ENCODE measurements at regions of chr4 and their contacts with region 1.

Region 1: DNA sequence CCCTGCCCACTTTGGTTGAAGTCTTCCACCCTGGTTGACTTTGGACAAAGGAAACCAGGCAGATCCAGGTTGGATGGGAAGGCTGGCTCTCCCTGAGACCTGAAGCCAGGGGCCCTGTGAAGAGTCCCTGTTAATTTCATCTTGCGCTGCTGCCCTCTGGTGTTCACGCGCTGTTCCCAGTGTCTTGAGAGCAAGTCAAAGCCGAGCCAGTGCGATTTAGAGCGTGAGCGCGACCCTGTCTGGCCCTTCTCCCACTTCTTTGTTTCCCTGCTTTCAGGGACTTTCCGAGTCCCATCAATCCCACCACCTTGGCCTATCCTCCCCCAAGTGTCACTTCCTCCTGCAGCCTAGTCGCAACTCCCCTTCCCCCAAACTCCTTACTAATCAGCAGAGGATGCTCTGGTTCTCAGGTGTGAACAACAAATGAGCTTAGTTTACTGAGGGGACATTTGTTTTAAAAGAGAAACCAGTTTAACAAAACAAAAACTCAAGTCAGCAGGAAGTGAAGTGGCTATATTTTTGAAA is 25.8 kb upstream of the CHRNA9 start:
- DNase-seq: peak; percentile 57
- CTCF ChIP-seq: peak; percentile 91

Region 2: GRCh38 chr4:39657465-39657864 is 651.8 kb before region 1 on chr4:
- CTCF ChIA-PET with region 1: no interaction called
- POLR2A ChIA-PET with region 1: no interaction called
- DNase-seq: peak; percentile 71
- CTCF ChIP-seq: no peak

Region 3: DNA sequence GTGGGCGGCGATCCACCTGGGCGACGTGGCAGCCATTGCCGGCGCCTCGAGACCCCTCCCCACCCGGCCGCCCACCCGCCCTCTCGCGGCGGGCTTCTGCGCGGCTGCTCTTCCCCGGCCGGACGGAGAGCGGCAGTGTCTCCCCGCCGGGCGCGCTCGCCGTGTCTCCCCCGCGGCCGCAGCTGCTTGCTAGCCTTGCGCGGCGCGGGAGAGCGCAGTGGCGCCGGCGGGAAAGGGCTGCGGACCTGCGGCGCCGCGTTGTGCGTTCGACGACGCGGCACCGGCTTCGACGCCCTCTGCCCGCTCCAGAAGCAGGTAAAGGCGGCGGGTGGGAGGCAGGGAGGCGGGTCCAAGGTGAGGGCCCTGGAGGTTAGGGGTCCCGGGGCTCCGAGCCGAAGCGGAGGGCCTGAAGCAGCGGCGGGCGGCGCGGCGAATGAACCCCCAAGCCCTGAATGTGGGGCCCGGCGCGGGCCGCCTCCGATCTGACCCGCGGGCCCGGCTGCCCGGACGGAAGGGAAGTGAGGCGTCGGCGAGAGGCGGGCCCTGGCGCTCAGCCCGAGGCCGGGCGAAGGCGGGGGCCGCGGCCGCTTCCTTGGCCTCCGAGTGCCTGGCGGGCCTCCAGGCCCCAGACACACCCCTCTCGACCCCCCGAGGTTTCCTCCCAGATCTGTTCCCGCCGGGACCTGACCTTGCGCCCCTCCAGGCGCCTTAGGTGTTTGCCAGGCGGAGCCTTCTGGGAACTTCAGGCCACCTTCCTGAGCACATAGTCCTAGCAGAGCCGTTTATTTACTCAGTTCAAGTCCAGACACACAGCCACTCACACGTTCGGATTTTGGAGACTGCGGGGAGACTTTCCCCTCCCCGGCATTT is 252.4 kb before region 1 on chr4 and contains the start of gene N4BP2:
- CTCF ChIA-PET with region 1: interaction called, 17 read pairs
- POLR2A ChIA-PET with region 1: no interaction called
- DNase-seq: peak; percentile 82
- CTCF ChIP-seq: peak; percentile 84

Region 4: DNA sequence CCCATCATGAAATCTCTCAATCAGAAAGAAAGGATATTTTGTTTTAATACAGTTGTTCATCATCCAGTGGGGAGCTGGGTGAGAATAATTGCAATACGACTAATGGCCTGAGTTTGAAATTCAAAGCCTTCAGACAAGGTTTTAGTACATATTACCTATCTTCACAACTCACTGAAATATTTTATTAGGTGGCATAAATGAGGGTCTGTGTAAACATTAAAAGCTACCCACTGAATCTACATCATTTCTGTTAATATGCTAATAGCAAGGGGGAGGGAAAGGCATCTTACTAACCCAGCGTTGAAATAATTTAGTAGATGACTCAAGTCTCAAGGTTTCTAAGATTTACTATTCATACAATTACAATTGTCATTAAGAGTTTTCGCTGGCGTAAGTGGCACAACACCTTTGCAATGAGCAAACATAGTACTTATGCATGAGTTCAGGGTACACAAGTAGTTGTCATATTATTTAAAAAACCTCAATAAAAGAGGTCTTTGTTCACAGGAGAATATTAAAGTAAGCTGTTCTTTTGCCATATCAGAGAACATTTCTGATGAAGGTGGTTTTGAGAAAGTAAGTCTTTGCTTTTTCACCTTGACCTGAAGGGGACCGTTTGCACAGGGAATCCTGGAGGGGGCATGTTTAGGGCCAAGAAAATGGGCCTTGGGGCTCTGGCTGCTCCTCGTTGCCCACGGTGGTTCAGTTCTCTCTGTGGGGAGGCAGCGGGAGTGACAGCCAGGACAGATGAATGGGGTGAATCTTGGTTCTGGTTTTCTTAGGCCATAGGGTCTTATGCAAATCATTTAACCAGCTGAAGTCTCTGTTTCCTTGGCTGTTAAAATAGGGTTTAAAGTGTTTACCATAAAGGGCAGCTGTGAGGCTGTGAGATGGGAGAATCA is 116.9 kb before region 1 on chr4:
- CTCF ChIA-PET with region 1: interaction called, 14 read pairs
- POLR2A ChIA-PET with region 1: no interaction called
- DNase-seq: no peak
- CTCF ChIP-seq: no peak

Region 5: DNA sequence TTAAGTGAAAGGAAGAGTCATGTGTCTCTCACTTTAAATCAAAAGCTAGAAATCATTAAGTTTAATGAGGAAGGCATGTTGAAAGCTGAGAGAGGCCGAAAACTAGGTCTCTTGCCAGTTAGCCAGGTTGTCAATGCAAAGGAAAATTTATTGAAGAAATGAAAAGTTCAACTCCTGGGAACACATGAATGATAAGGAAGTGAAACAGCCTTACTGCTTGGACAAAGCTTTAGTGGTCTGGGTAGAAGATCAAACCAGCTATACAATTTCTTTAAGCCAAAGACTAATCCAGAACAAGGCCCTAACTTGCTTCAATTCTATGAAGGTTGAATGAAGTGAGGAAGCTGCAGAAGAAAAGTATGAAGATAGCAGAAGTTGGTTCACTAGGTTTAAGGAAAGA is 87.6 kb before region 1 on chr4:
- CTCF ChIA-PET with region 1: interaction called, 19 read pairs
- POLR2A ChIA-PET with region 1: no interaction called
- DNase-seq: no peak
- CTCF ChIP-seq: no peak

Region 6: GRCh38 chr4:40325189-40326019 is 16.1 kb after region 1 on chr4:
- CTCF ChIA-PET with region 1: interaction called, 84 read pairs
- POLR2A ChIA-PET with region 1: no interaction called
- DNase-seq: peak; percentile 83
- CTCF ChIP-seq: peak; percentile 77

Region 7: DNA sequence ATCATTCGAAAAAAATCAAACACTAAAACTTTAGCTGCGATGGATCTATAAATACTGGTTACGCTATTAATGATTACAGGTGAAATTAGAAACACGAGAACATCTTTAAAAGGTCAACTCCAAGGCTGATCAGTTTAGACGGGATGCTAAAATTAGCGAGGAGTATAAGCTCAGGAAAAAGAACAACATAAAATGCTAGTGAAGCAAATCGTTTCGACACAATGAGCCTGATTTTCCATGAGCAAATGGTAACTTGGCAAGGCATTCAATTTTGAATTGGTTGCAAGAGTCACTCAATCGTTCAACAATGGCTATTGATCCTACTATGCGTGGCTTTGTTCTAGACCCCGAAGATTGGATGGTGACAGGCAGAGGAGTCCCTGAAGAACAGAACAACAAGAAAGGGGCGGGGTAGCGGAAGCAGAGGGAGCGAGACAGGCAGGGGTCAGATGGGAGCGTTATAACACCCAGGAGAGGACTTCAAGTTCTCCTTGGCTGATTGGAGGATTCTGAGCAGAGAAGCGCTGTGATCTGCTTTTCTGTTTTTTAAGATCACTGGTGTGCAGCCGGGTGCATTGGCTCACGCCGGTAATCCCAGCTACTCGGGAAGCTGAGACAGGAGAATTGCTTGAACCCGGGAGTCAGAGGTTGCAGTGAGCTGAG is 173.8 kb after region 1 on chr4:
- CTCF ChIA-PET with region 1: no interaction called
- POLR2A ChIA-PET with region 1: no interaction called
- DNase-seq: no peak
- CTCF ChIP-seq: no peak

Region 8: GRCh38 chr4:40629401-40630334 is 320.4 kb after region 1 on chr4 and contains the start of gene RBM47:
- CTCF ChIA-PET with region 1: no interaction called
- POLR2A ChIA-PET with region 1: no interaction called
- DNase-seq: peak; percentile 60
- CTCF ChIP-seq: peak; percentile 26

Measured in GM10248 (cell line).